Heart left ventricle (tissue), 16 donors: ENCODE measurements at regions of chr1 and their contacts with region 1.

Region 1: DNA sequence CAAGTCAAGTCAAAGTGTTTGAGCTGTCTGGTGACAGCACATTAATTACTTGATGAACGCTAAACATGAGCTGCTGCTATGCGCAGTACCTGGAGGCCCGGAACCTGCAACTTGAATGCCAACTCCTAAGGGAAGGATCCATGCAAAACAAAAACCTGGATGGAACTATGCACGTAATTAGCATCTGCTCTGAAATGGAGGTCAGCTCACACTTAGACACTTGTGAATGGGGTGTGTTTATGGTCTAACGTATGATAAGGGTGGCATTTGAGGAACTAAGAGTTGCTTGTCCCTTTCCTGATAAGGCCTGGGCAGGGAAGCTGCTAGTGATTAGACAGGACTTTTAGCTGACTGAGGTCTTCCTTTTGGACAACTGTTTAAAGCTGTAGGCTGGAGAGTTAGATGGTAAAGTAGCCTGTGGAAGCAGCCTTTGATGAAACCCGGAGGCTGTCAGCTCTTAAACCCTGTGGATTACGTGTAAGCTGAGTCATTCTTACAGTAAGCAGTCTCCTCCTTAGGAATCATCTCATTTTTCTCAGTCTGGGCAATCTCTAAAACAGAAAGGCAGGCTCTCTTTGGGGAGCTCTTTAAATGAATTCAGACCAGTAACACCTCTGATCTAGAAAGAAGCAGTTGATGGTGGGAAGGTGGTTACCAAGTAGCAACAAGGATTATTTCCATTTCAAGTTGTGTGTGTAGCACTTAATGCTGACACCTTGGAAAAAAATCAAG is 6.8 kb downstream of the TENT5C start:
- DNase-seq: no peak
- ATAC-seq: peak; percentile 31 to 51 (median 47)
- H3K4me3 ChIP-seq: no peak overlapping the region
- H3K27ac ChIP-seq: peak overlapping the region in 10 of 12 donors; percentile 12 to 65 (median 47)
- H3K4me1 ChIP-seq: peaks cover 0 to 74% (median 42%) of the 10 kb centered on the region in 12 donors
- H3K27me3 ChIP-seq: no peaks in the 10 kb centered on the region
- CTCF ChIP-seq: no peak
- POLR2A ChIP-seq: no peak

Region 2: DNA sequence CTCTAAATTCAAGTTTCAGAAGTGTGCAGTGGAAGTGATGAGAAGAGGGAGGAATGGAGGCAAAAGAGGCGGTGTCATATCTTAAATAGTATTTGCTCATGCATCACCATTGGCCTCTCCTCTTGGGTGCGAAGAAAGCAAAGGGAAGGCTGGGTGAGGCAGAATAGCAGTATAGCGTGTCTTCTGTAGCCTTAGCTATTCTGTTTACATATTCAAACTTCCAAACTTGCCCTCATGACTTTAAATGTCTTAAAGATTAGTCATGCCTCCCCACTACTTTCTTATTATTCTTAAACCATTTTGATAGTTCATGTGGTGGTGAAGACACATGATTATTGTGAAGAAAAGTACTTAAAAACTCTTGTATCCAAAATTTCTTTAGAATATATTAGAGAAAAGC is 111.4 kb before region 1 on chr1:
- intact Hi-C with region 1: no loop called
- DNase-seq: no peak
- ATAC-seq: no peak
- H3K4me3 ChIP-seq: no peak overlapping the region
- H3K27ac ChIP-seq: no peak overlapping the region
- H3K4me1 ChIP-seq: no peaks in the 10 kb centered on the region
- H3K27me3 ChIP-seq: no peaks in the 10 kb centered on the region
- CTCF ChIP-seq: no peak
- POLR2A ChIP-seq: no peak

Region 3: GRCh38 chr1:117685936-117686806 is 73.5 kb after region 1 on chr1:
- intact Hi-C with region 1: loop called in 1 of 10 experiments (anchors 2 kb)
- DNase-seq: no peak
- ATAC-seq: peak in 1 of 4 donors; percentile 7
- H3K4me3 ChIP-seq: no peak overlapping the region
- H3K27ac ChIP-seq: peak overlapping the region in 2 of 12 donors; percentile 37 to 56
- H3K4me1 ChIP-seq: peaks cover 0 to 46% (median 18%) of the 10 kb centered on the region in 12 donors
- H3K27me3 ChIP-seq: no peaks in the 10 kb centered on the region
- CTCF ChIP-seq: no peak
- POLR2A ChIP-seq: no peak